ENCODE measurements at regions of chr1 and their contacts with region 1.

Region 1: DNA sequence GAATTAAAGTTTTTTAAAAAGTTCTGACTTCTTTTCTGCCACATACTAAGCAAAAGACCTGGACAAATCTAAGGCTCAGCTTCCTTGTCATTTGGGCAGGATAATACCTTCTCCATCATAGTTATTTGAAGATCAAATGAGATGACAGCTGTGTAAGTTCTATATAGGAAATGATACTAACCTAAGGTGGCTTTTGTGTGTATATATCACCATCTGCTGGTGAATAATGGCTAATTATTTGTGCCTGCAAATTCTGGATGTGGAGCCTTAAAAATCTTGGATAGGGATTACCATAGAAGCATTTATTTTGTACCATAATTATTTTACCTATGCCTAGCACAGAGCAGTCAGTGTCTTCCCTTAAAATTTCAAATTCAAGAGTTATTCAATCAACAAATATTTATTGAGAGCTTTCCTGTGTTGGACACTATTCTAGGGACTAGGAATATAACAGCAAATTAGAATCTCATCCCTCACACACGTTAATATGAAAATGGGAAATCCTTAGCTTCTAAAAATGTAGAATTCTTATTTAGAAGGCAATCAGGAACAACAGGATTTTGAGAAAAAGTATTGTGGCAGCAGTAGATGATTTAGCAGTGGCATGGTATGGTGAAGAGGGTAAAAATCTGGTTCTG is 89.8 kb downstream of the TMEM200B start:
- DNase-seq: no peak
- H3K4me3 ChIP-seq: no peak overlapping the region
- H3K27ac ChIP-seq: no peak overlapping the region
- H3K4me1 ChIP-seq: no peaks in the 10 kb centered on the region
- H3K27me3 ChIP-seq: no peaks in the 10 kb centered on the region
- CTCF ChIP-seq: peak; percentile 39 to 84 (median 71)
- POLR2A ChIP-seq: no peak

Region 2: DNA sequence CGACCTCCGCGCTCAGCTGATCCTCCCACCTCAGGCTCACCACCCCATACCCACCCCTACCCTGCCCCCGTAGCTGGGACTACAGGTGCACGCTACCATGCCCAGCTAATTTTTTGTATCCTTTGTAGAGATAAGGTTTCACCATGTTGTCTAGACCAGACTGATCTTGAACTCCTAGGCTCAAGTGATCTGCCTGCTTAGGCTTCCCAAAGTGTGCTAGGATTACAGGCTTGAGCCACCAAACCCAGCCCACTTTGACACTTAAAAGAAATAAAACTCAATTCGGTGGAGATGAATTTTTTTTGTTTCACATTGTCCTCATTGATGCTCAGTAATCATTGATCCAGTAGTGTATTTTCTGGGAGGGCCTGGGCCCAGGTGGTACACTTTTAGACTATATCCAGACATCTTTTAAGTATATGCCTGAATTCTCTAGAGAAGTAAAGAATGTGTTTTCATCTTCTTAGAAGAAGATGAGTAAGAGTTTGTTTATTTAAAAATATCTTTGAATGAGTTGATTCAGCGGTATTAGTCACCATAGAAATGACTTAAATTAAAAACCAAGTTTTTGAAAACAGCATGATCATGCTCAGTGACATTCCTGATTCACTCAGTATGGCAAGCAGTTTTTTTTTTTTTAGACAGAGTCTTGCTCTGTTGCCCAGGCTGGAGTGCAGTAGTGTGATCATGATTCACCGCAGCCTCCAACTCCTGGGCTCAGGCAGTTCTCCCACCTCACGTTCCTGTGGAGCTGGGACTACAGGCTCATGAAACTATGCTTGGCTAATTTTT is 61.8 kb before region 1 on chr1:
- intact Hi-C with region 1: no loop called
- DNase-seq: no peak
- H3K4me3 ChIP-seq: no peak overlapping the region
- H3K27ac ChIP-seq: no peak overlapping the region
- H3K4me1 ChIP-seq: peaks cover 0 to 18% (median 0%) of the 10 kb centered on the region in 6 donors
- H3K27me3 ChIP-seq: no peaks in the 10 kb centered on the region
- CTCF ChIP-seq: no peak
- POLR2A ChIP-seq: no peak

Region 3: DNA sequence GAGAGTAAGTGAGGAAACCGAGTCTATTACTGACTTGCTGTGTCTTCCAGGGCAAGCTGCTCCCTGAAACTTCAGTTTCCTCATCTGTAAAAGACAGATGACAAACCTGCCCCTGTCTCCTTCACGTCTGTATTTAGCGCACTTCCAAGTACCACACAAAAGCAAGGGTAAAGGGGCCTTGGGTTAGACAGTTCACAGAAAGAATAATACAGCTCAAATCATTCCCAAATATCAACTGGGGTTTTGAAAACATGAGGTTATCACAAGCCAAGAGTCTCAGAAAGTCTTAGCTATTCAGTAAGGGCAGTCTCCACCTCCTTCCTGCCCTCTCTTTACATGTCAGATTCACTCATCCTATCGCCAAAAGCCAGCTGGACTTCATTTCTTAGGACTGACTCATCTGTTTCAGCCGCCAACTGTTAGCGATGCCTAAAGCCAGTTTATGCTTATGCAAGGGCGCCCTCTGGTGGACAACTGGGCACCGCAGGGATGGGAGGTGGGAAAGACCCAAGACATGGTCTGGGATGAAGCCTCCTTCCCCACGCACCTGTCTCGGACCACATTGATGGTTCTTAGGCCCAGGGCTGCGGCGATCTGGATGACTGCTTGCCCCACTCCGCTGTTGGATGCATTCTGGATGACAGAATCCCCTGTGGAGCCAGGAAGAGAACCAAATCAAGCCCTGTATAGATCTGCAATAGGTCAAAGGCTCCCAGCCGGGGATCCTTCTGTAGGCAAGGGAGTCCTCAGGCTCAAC is 168.8 kb after region 1 on chr1:
- intact Hi-C with region 1: loop called (anchors 10 kb)
- DNase-seq: peak; percentile 96
- H3K4me3 ChIP-seq: no peak overlapping the region
- H3K27ac ChIP-seq: peak overlapping the region in 7 of 8 donors; percentile 52 to 76 (median 68)
- H3K4me1 ChIP-seq: peaks cover 2 to 22% (median 12%) of the 10 kb centered on the region in 6 donors
- H3K27me3 ChIP-seq: no peaks in the 10 kb centered on the region
- CTCF ChIP-seq: peak; percentile 93 to 99 (median 97)
- POLR2A ChIP-seq: no peak